Right ventricle myocardium superior (tissue), 1 donor: ENCODE measurements at regions of chr12 and their contacts with region 1.

Region 1: GRCh38 chr12:70733385-70733784 is 96.2 kb upstream of the PTPRB start:
- DNase-seq: no peak
- ATAC-seq: peak; percentile 87

Region 2: DNA sequence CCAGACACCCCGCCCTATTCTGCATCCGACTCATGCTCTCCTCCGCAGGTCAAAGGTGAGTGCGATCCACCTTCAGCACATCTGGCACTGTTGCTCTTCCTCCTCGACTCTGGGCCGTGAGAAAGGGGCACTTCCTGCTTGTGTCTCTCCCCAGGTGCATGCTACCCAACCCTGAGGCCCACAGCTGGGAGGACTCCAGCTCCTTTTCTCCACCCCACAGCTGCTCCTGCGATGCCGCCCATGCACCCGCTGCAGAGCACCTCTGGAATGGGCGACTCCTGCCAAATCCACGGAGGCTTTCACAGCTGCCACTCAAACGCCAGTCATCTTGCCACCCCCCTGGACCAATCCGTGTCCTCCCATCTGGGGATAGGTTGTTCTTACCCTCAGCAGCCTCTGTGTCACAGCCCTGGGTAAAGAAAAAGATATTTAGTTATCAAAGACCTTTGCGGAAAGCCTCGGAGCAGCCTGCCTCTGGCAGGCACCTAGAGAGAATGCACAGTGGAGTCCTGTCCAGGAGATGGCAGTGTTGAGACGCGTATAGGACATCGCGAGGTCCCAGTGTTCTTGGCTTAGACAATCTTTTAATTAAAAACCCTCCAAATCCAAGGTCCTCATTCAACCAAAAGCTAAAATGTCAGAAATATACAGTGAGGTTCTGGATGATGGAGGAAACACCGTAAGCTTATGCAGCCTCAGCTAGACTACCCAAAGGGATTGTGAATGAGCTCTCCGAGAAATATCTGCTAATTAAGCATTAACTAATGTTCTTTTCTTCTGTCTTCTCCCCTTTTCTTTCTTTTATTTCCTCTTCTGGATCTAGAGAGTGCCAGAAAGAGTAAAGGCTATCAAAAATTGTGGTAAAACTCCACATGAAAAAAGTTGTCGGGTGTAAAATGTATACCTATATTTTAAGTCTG is 854.1 kb before region 1 on chr12:
- intact Hi-C with region 1: loop called (anchors 5 kb)
- DNase-seq: peak; percentile 59
- ATAC-seq: peak; percentile 97

Region 3: GRCh38 chr12:70853326-70853725 is 119.9 kb after region 1 on chr12:
- intact Hi-C with region 1: loop called (anchors 5 kb)
- DNase-seq: no peak
- ATAC-seq: peak; percentile 92

Region 4: DNA sequence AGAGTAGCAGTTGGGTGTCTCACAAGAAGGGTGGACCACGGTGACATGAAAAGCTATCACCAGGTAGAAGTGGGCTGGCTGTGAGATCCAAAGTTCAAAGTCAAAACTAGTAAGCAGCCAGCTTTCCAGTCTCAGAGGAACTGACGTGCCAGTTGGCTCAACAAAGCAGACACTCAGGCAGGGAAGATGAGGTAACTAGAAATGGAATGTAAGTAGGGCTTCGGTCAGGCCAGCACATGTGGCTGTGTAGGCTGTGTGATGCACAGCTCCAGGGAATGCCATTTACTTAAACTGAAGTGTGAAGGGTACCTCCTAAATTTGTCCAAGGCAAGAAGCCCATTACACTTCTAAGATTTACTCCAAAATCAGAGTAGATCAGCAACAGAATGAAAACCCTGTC is 143.6 kb after region 1 on chr12:
- intact Hi-C with region 1: no loop called
- DNase-seq: no peak
- ATAC-seq: peak; percentile 41

Region 5: GRCh38 chr12:71029302-71029701 is 295.9 kb after region 1 on chr12:
- intact Hi-C with region 1: loop called (anchors 10 kb)
- DNase-seq: no peak
- ATAC-seq: no peak

Region 6: GRCh38 chr12:71045781-71046180 is 312.4 kb after region 1 on chr12:
- intact Hi-C with region 1: no loop called
- DNase-seq: no peak
- ATAC-seq: peak; percentile 60